Activated CD8-positive, alpha-beta T cell treated with anti-CD3 and anti-CD28 coated beads, Interleukin-2, amount 10 ng/mL, durations not matched to agents 7 days and 5 days (primary cell): ENCODE measurements at regions of chr2 and their contacts with region 1.

Region 1: DNA sequence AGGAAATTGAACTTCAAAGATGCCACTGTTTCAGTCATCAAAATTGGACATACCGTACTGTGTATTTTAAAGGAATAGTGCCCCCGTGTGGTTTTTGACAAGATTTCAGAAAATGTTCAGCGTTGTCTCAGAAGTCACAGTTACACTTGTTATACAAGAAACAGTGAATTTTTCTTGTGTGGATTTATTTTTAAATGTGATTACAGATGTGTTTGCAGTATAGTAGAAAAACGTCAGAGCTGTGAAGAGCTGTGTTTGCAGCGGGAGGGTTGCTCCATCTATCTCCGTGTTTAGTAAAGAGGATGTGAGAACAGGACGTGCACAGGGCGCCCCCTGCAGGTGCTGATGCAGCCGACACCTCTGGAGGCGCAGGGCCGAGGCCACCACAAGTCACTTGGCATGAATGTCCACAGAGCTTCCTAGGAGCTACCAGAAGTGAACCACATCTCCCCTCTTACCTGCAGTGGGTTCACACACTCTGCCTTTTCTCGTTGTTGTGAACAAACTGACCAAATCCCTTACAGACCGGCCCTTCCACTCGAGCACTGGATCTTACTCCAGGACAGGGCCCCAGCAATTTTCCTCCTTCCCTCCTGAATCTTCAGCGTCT is 73.1 kb downstream of the CACNB4 start:
- DNase-seq: peak; percentile 87
- ATAC-seq: peak; percentile 98
- H3K4me3 Mint-ChIP-seq: peak overlapping the region; percentile 70
- H3K27ac Mint-ChIP-seq: peak overlapping the region; percentile 71
- H3K4me1 Mint-ChIP-seq: peaks cover 6% of the 10 kb centered on the region
- H3K27me3 Mint-ChIP-seq: peaks cover 10% of the 10 kb centered on the region

Region 2: GRCh38 chr2:151976945-151977353 is 48.8 kb before region 1 on chr2:
- CTCF ChIA-PET with region 1: interaction called, 11 read pairs
- POLR2A ChIA-PET with region 1: no interaction called
- DNase-seq: no peak
- ATAC-seq: no peak
- H3K4me3 Mint-ChIP-seq: no peak overlapping the region
- H3K27ac Mint-ChIP-seq: no peak overlapping the region
- H3K4me1 Mint-ChIP-seq: peaks cover 4% of the 10 kb centered on the region
- H3K27me3 Mint-ChIP-seq: no peaks in the 10 kb centered on the region

Region 3: DNA sequence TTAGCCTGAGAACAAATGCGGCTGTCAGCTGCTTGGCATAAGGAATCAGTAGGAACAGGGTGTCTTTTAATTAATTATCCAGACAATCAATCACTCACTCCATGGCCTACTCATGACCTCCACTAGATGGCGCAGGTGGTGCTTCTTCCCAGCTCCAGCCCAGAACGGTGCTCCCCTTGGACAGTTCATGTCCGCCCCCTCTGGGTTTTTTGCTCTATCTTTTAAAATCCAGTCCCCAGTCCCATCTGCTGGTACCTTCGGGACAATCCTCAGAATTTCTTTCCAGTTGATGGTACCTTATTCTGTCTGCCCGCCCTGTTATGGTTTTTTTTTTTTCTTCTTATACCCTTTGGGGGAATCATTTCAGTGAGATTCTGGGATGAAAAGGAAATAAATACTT is 26.7 kb before region 1 on chr2:
- CTCF ChIA-PET with region 1: interaction called, 30 read pairs
- POLR2A ChIA-PET with region 1: no interaction called
- DNase-seq: peak; percentile 56
- ATAC-seq: peak; percentile 72
- H3K4me3 Mint-ChIP-seq: no peak overlapping the region
- H3K27ac Mint-ChIP-seq: no peak overlapping the region
- H3K4me1 Mint-ChIP-seq: peaks cover under 1% of the 10 kb centered on the region
- H3K27me3 Mint-ChIP-seq: no peaks in the 10 kb centered on the region

Region 4: GRCh38 chr2:152012697-152013096 is 13.1 kb before region 1 on chr2:
- CTCF ChIA-PET with region 1: interaction called, 42 read pairs
- POLR2A ChIA-PET with region 1: no interaction called
- DNase-seq: no peak
- ATAC-seq: no peak
- H3K4me3 Mint-ChIP-seq: no peak overlapping the region
- H3K27ac Mint-ChIP-seq: no peak overlapping the region
- H3K4me1 Mint-ChIP-seq: no peaks in the 10 kb centered on the region
- H3K27me3 Mint-ChIP-seq: peaks cover 2% of the 10 kb centered on the region

Region 5: GRCh38 chr2:152036611-152037469 is 11.1 kb after region 1 on chr2:
- CTCF ChIA-PET with region 1: interaction called, 27 read pairs
- POLR2A ChIA-PET with region 1: no interaction called
- DNase-seq: peak; percentile 71
- ATAC-seq: peak; percentile 77
- H3K4me3 Mint-ChIP-seq: no peak overlapping the region
- H3K27ac Mint-ChIP-seq: no peak overlapping the region
- H3K4me1 Mint-ChIP-seq: no peaks in the 10 kb centered on the region
- H3K27me3 Mint-ChIP-seq: no peaks in the 10 kb centered on the region

Region 6: DNA sequence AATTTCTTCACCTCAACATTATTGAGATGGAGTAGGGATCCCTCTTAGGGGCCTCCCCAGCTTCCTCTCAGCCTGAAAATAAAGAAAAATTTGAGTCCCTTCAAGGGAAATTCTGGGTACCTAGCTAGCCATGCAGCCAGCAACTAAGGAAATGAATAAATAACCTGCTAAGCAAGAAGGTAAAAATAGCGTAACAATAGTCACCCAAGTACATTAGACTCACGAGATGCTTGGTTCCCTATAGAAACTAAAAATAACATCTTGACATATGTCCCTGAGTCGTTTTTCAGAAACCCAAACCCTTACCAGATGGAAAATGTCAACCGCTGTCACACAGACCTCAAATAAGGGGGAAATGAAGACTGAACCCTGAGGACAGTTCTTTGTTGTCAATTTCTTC is 21.2 kb after region 1 on chr2:
- CTCF ChIA-PET with region 1: interaction called, 11 read pairs
- POLR2A ChIA-PET with region 1: no interaction called
- DNase-seq: no peak
- ATAC-seq: no peak
- H3K4me3 Mint-ChIP-seq: no peak overlapping the region
- H3K27ac Mint-ChIP-seq: no peak overlapping the region
- H3K4me1 Mint-ChIP-seq: no peaks in the 10 kb centered on the region
- H3K27me3 Mint-ChIP-seq: peaks cover 10% of the 10 kb centered on the region

Region 7: GRCh38 chr2:152134488-152135280 is 108.9 kb after region 1 on chr2:
- CTCF ChIA-PET with region 1: no interaction called
- POLR2A ChIA-PET with region 1: no interaction called
- DNase-seq: peak; percentile 27
- ATAC-seq: peak; percentile 67
- H3K4me3 Mint-ChIP-seq: no peak overlapping the region
- H3K27ac Mint-ChIP-seq: no peak overlapping the region
- H3K4me1 Mint-ChIP-seq: peaks cover 13% of the 10 kb centered on the region
- H3K27me3 Mint-ChIP-seq: no peaks in the 10 kb centered on the region